Spleen (tissue), 13 donors: ENCODE measurements at regions of chr2 and their contacts with region 1.

Region 1: DNA sequence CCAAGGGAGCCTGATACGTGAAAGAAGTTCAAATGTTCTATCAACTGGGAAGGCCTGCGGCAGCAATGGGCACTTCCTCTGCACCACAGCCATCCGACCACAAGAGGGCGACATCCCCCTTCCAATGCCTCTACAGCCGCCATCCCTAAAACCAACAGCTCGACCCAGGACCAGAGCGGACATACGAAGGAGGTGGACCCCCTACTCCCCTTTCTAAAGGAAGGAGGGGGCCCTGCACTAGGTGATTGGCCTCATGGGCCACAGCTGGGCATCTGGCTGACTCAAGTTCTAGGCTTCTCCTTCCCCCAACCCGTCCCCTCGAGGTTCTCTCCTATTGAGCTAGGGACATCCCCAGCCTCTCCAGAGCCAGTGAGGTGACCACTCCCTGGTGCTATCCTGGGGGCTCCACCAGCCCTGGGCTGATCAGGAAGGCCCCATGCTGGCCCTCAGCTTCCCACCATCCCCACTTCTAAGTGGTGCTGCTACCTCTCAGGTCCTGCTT is 217.2 kb downstream of the TNS1 start:
- DNase-seq: peak; percentile 91
- H3K4me3 ChIP-seq: no peak overlapping the region
- H3K27ac ChIP-seq: no peak overlapping the region
- H3K4me1 ChIP-seq: peaks cover 8 to 32% (median 20%) of the 10 kb centered on the region in 6 donors
- H3K27me3 ChIP-seq: no peaks in the 10 kb centered on the region
- CTCF ChIP-seq: peak; percentile 92 to 99 (median 96)
- POLR2A ChIP-seq: no peak

Region 2: DNA sequence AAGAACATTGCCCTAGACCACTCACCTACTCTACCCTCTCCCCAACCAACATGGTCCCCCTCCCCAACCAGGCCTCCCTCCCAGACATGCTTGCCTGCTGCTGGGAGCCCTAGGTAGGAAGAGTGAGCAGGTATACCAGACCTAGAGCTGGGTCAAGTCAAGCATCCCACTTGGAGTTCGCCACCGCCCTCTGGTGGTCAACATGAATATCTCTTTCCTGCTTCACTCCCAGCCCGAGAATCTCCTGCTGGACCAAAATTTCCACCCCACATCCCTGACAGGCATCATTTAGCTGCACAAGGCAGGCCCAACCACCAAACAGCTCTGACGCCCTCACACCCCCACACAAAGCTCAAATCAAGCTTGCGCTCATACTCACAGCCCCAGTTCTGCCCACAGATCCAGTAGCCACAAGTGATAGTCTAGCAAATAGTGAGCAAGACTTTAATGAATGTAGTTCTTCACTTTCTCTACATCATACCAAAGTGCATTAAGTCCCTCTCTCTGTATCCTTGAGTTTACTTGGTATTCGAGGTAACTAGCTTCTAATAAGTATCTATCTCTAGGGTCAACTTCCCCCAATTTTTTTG is 101.2 kb after region 1 on chr2:
- intact Hi-C with region 1: loop called (anchors 5 kb)
- DNase-seq: peak; percentile 87
- H3K4me3 ChIP-seq: no peak overlapping the region
- H3K27ac ChIP-seq: peak overlapping the region in 4 of 8 donors; percentile 23 to 58 (median 42)
- H3K4me1 ChIP-seq: peaks cover 3 to 60% (median 34%) of the 10 kb centered on the region in 6 donors
- H3K27me3 ChIP-seq: no peaks in the 10 kb centered on the region
- CTCF ChIP-seq: peak; percentile 57 to 83 (median 76)
- POLR2A ChIP-seq: no peak

Region 3: GRCh38 chr2:217993817-217994463 is 208.3 kb after region 1 on chr2:
- intact Hi-C with region 1: loop called (anchors 5 kb)
- DNase-seq: peak; percentile 88
- H3K4me3 ChIP-seq: no peak overlapping the region
- H3K27ac ChIP-seq: peak overlapping the region in 3 of 8 donors; percentile 13 to 35 (median 21)
- H3K4me1 ChIP-seq: peaks cover 4 to 45% (median 30%) of the 10 kb centered on the region in 6 donors
- H3K27me3 ChIP-seq: no peaks in the 10 kb centered on the region
- CTCF ChIP-seq: peak; percentile 16 to 84 (median 63)
- POLR2A ChIP-seq: no peak

Region 4: GRCh38 chr2:218033590-218034496 is 248.2 kb after region 1 on chr2:
- intact Hi-C with region 1: loop called (anchors 10 kb)
- DNase-seq: no peak
- H3K4me3 ChIP-seq: peak overlapping the region in 6 of 8 donors; percentile 14 to 63 (median 28)
- H3K27ac ChIP-seq: peak overlapping the region in 3 of 8 donors; percentile 47 to 76 (median 48)
- H3K4me1 ChIP-seq: peaks cover 4 to 29% (median 15%) of the 10 kb centered on the region in 6 donors
- H3K27me3 ChIP-seq: peaks cover 0 to 10% (median 0%) of the 10 kb centered on the region in 7 donors
- CTCF ChIP-seq: no peak
- POLR2A ChIP-seq: no peak

Region 5: GRCh38 chr2:218074031-218074430 is 288.4 kb after region 1 on chr2:
- intact Hi-C with region 1: loop called (anchors 10 kb)
- DNase-seq: peak; percentile 85
- H3K4me3 ChIP-seq: no peak overlapping the region
- H3K27ac ChIP-seq: no peak overlapping the region
- H3K4me1 ChIP-seq: peaks cover 0 to 8% (median under 1%) of the 10 kb centered on the region in 6 donors
- H3K27me3 ChIP-seq: no peaks in the 10 kb centered on the region
- CTCF ChIP-seq: peak in 8 of 11 experiments; percentile 29 to 72 (median 51)
- POLR2A ChIP-seq: no peak